ENCODE measurements at regions of chr4 and their contacts with region 1.

Region 1: GRCh38 chr4:37452952-37453280 is 208.4 kb downstream of the NWD2 start:
- DNase-seq: peak; percentile 50
- ATAC-seq: no peak
- H3K4me3 ChIP-seq: peak overlapping the region in 4 of 5 experiments; percentile 33 to 55 (median 50)
- H3K4me3 Mint-ChIP-seq: peak overlapping the region; percentile 80
- H3K27ac ChIP-seq: no peak overlapping the region
- H3K27ac Mint-ChIP-seq: no peak overlapping the region
- H3K4me1 ChIP-seq: peaks cover 12 to 17% of the 10 kb centered on the region in 2 donors
- H3K4me1 Mint-ChIP-seq: peaks cover 15% of the 10 kb centered on the region
- H3K27me3 ChIP-seq: peaks cover 0 to 36% (median 35%) of the 10 kb centered on the region in 4 experiments
- H3K27me3 Mint-ChIP-seq: peaks cover 64% of the 10 kb centered on the region
- CTCF ChIP-seq: peak; percentile 39

Region 2: GRCh38 chr4:37568481-37568880 is 115.6 kb after region 1 on chr4:
- CTCF ChIA-PET with region 1: interaction called, 4 read pairs
- POLR2A ChIA-PET with region 1: no interaction called
- intact Hi-C with region 1: loop called (anchors 5 kb)
- DNase-seq: no peak
- ATAC-seq: no peak
- H3K4me3 ChIP-seq: no peak overlapping the region
- H3K4me3 Mint-ChIP-seq: no peak overlapping the region
- H3K27ac ChIP-seq: no peak overlapping the region
- H3K27ac Mint-ChIP-seq: no peak overlapping the region
- H3K4me1 ChIP-seq: no peaks in the 10 kb centered on the region
- H3K4me1 Mint-ChIP-seq: peaks cover 2% of the 10 kb centered on the region
- H3K27me3 ChIP-seq: no peaks in the 10 kb centered on the region
- H3K27me3 Mint-ChIP-seq: peaks cover 6% of the 10 kb centered on the region
- CTCF ChIP-seq: no peak

Measured in B cell (primary cell).